Caco-2 (cell line): ENCODE measurements at regions of chr1 and their contacts with region 1.

Region 1: GRCh38 chr1:210311726-210312493 is 16.8 kb upstream of the HHAT start:
- DNase-seq: no peak
- H3K4me3 ChIP-seq: peak overlapping the region; percentile 45
- H3K4me3 Mint-ChIP-seq: peak overlapping the region; percentile 85
- H3K27ac Mint-ChIP-seq: no peak overlapping the region
- H3K4me1 ChIP-seq: no peaks in the 10 kb centered on the region
- H3K4me1 Mint-ChIP-seq: peaks cover 6% of the 10 kb centered on the region
- H3K27me3 ChIP-seq: no peaks in the 10 kb centered on the region
- H3K27me3 Mint-ChIP-seq: peaks cover 4% of the 10 kb centered on the region
- CTCF ChIP-seq: no peak

Region 2: GRCh38 chr1:210024996-210025395 is 286.9 kb before region 1 on chr1:
- CTCF ChIA-PET with region 1: no interaction called
- POLR2A ChIA-PET with region 1: no interaction called
- intact Hi-C with region 1: loop called (anchors 2 kb)
- DNase-seq: no peak
- H3K4me3 ChIP-seq: no peak overlapping the region
- H3K4me3 Mint-ChIP-seq: no peak overlapping the region
- H3K27ac Mint-ChIP-seq: no peak overlapping the region
- H3K4me1 ChIP-seq: no peaks in the 10 kb centered on the region
- H3K4me1 Mint-ChIP-seq: no peaks in the 10 kb centered on the region
- H3K27me3 ChIP-seq: no peaks in the 10 kb centered on the region
- H3K27me3 Mint-ChIP-seq: no peaks in the 10 kb centered on the region
- CTCF ChIP-seq: no peak

Region 3: GRCh38 chr1:210143465-210144062 is 168.3 kb before region 1 on chr1:
- CTCF ChIA-PET with region 1: interaction called, 11 read pairs
- POLR2A ChIA-PET with region 1: no interaction called
- intact Hi-C with region 1: loop called (anchors 1 kb)
- DNase-seq: peak; percentile 66 to 77
- H3K4me3 ChIP-seq: no peak overlapping the region
- H3K4me3 Mint-ChIP-seq: no peak overlapping the region
- H3K27ac Mint-ChIP-seq: no peak overlapping the region
- H3K4me1 ChIP-seq: no peaks in the 10 kb centered on the region
- H3K4me1 Mint-ChIP-seq: no peaks in the 10 kb centered on the region
- H3K27me3 ChIP-seq: no peaks in the 10 kb centered on the region
- H3K27me3 Mint-ChIP-seq: no peaks in the 10 kb centered on the region
- CTCF ChIP-seq: peak; percentile 63 to 69

Region 4: GRCh38 chr1:210292231-210292871 is 19.6 kb before region 1 on chr1:
- CTCF ChIA-PET with region 1: interaction called, 3 read pairs
- POLR2A ChIA-PET with region 1: no interaction called
- intact Hi-C with region 1: loop called (anchors 2 kb)
- DNase-seq: peak; percentile 71 to 84
- H3K4me3 ChIP-seq: peak overlapping the region; percentile 37
- H3K4me3 Mint-ChIP-seq: peak overlapping the region; percentile 73
- H3K27ac Mint-ChIP-seq: peak overlapping the region; percentile 54
- H3K4me1 ChIP-seq: no peaks in the 10 kb centered on the region
- H3K4me1 Mint-ChIP-seq: peaks cover 6% of the 10 kb centered on the region
- H3K27me3 ChIP-seq: no peaks in the 10 kb centered on the region
- H3K27me3 Mint-ChIP-seq: no peaks in the 10 kb centered on the region
- CTCF ChIP-seq: peak; percentile 23 to 67